Activated CD4-positive, alpha-beta T cell treated with anti-CD3 and anti-CD28 coated beads for 36 hours (primary cell): ENCODE measurements at regions of chr1 and their contacts with region 1.

Region 1: GRCh38 chr1:109984456-109985275 is at the start of gene AHCYL1:
- DNase-seq: peak; percentile 100
- ATAC-seq: peak; percentile 99
- H3K4me3 Mint-ChIP-seq: peak within 1 kb of the TSS; percentile 92
- H3K27ac Mint-ChIP-seq: peak within 1 kb of the TSS; percentile 95
- H3K4me1 Mint-ChIP-seq: peaks cover 31% of the 10 kb centered on the region
- H3K27me3 Mint-ChIP-seq: no peaks in the 10 kb centered on the region
- total RNA-seq, gene AHCYL1: 79.1 to 82.6 TPM

Region 2: GRCh38 chr1:108345787-108346517 is 1638.7 kb before region 1 on chr1:
- CTCF ChIA-PET with region 1: no interaction called
- POLR2A ChIA-PET with region 1: no interaction called
- intact Hi-C with region 1: no loop called
- DNase-seq: no peak
- ATAC-seq: no peak
- H3K4me3 Mint-ChIP-seq: no peak overlapping the region
- H3K27ac Mint-ChIP-seq: no peak overlapping the region
- H3K4me1 Mint-ChIP-seq: no peaks in the 10 kb centered on the region
- H3K27me3 Mint-ChIP-seq: peaks cover 4% of the 10 kb centered on the region

Region 3: DNA sequence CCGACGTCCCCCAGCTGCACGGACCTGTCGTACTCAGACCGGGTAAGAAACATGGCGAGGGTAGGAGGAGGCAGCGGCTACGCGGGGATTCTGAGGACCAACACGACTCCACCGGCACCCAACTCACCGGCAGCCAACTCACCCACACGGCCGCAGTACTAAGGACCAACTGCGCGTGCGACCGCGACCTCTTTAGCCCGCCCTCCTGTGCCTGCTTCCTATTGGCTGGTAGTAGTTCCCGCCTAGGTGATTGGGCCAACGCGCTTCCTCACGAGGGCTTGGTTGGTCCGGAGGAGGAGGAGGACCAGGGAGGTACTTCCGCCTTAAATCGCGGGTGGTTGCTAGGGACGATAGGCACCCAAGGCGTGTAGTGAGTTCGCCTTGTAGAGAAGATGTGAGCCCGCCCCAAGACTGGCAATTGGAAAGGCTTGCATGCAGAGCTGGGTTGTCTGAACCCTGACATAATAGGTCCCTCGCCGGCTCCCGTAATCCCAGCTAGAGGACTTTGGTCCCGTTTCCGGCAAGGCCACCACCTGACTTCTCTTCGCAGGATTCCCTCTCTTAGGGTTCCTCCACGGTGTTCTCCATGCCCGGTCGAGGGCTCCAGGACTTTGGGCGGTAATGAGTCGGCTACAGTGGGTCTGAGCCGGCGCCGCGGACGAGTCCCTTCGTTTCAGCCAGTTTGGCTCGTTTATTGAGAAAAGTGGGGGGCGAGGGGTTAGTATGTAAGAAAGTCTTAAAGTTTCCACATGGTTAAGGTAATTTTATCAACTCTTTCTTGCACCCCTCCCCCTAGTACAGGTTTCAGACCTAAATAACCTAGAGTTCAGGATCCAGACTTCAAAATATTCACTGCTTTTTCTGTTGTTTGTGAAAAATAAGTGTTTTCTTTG is 558.1 kb before region 1 on chr1 and contains the start of gene PSMA5:
- CTCF ChIA-PET with region 1: no interaction called
- POLR2A ChIA-PET with region 1: no interaction called
- intact Hi-C with region 1: loop called in 1 of 2 experiments (anchors 10 kb)
- DNase-seq: peak; percentile 97
- ATAC-seq: peak; percentile 97
- H3K4me3 Mint-ChIP-seq: peak within 1 kb of the TSS; percentile 91
- H3K27ac Mint-ChIP-seq: peak within 1 kb of the TSS; percentile 96
- H3K4me1 Mint-ChIP-seq: peaks cover 34% of the 10 kb centered on the region
- H3K27me3 Mint-ChIP-seq: no peaks in the 10 kb centered on the region
- total RNA-seq, gene PSMA5: 151 to 249 TPM

Region 4: DNA sequence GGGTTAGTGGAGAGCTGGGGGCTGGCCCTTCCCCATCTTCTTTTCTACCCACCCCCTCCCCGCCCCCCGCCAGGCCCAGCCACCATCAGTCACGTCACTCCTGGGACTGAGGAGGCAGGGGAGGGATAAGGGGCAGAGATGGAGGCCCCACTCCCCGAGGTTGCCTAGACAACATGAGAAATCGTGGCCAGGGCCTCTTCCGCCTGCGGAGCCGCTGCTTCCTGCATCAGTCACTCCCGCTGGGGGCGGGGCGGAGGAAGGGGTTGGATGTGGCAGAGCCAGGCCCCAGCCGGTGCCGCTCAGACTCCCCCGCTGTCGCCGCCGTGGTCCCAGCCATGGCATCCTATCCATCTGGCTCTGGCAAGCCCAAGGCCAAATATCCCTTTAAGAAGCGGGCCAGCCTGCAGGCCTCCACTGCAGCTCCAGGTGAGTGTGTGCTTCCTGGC is 363.8 kb before region 1 on chr1:
- CTCF ChIA-PET with region 1: interaction called, 6 read pairs
- POLR2A ChIA-PET with region 1: no interaction called
- intact Hi-C with region 1: loop called in 1 of 2 experiments (anchors 1 kb)
- DNase-seq: peak; percentile 99
- ATAC-seq: peak; percentile 86
- H3K4me3 Mint-ChIP-seq: peak overlapping the region; percentile 97
- H3K27ac Mint-ChIP-seq: peak overlapping the region; percentile 97
- H3K4me1 Mint-ChIP-seq: peaks cover 60% of the 10 kb centered on the region
- H3K27me3 Mint-ChIP-seq: no peaks in the 10 kb centered on the region

Region 5: DNA sequence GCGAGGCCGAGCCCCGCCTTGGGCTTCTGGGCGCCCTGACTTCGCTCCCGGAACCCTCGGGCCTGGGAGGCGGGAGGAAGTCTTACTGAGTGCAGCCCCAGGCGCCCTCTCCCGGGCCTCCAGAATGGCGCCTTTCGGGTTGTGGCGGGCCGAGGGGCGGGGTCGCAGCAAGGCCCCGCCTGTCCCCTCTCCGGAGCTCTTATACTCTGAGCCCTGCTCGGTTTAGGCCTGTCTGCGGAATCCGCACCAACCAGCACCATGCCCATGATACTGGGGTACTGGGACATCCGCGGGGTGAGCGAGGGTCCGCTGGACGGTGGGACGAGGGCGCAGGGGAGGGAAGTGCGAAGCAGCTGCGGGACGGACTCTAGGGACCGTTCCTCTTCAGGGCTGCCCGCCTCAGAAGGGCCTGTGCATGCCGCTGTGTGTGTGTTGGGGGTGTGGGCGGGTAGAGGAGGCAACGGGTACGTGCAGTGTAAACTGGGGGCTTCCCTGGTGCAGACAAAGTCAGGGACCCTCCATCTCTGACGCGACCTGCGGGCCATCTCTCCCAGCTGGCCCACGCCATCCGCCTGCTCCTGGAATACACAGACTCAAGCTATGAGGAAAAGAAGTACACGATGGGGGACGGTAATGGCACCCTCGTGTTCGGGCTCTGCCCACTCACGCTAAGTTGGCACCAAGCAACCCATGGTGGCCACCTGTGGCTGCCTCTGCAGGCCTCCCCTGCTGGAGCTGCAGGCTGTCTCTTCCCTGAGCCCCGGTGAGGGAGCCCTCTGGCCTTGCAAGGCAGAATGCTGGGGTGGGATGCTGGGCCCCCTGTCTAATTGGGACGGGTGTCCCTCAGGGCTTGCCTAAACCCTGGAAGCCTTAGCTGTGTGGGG is 296.8 kb before region 1 on chr1 and contains the start of gene GSTM1:
- CTCF ChIA-PET with region 1: interaction called, 6 read pairs
- POLR2A ChIA-PET with region 1: no interaction called
- intact Hi-C with region 1: loop called in 1 of 2 experiments (anchors 1 kb)
- DNase-seq: peak; percentile 94
- ATAC-seq: peak; percentile 99
- H3K4me3 Mint-ChIP-seq: peak within 1 kb of the TSS; percentile 88
- H3K27ac Mint-ChIP-seq: peak within 1 kb of the TSS; percentile 96
- H3K4me1 Mint-ChIP-seq: peaks cover 20% of the 10 kb centered on the region
- H3K27me3 Mint-ChIP-seq: no peaks in the 10 kb centered on the region
- total RNA-seq, gene GSTM1: 94.0 to 116 TPM

Region 6: GRCh38 chr1:109718491-109718890 is 266.2 kb before region 1 on chr1:
- CTCF ChIA-PET with region 1: no interaction called
- POLR2A ChIA-PET with region 1: no interaction called
- intact Hi-C with region 1: no loop called
- DNase-seq: no peak
- ATAC-seq: no peak
- H3K4me3 Mint-ChIP-seq: no peak overlapping the region
- H3K27ac Mint-ChIP-seq: no peak overlapping the region
- H3K4me1 Mint-ChIP-seq: peaks cover 4% of the 10 kb centered on the region
- H3K27me3 Mint-ChIP-seq: peaks cover 3% of the 10 kb centered on the region

Region 7: DNA sequence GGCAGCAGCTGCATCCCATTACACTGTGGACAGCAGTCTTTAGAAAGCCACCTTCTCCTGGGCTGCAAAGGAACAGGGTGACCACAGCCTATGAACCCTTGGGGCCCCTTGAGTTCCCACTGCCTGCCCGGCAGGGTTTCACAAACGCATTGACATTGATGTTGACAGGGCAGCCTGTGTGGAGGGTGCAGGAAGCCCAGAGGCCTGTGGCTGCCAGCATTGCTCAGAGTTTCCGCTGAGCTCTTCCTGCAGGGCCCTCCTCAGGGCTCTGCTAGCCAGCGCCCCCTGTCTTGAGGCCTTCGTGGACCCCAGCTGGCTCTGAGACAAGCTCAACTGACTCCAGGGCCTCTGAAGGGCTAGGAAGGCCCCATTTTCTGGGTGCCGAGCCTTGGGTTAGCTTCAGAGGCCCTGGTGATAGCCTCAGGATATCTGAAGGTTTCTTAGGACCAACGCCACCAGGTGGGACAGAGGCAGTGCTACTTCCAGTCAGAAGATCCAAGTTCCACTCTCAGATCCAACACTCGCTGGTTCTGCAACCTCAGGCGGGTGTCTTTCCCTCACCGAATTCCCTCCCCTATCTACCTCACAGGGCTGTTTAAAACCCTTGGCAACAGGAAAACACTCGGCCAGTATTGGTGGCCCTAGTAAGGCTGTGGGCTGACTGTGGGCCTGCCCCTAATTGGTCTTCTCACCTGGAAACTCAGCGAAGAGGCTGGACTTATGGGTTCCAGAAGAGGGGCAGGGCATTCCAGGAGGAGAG is 193.8 kb before region 1 on chr1:
- CTCF ChIA-PET with region 1: interaction called, 499 read pairs
- POLR2A ChIA-PET with region 1: interaction called, 5 read pairs
- intact Hi-C with region 1: loop called (anchors 1 to 5 kb)
- DNase-seq: peak; percentile 93
- ATAC-seq: peak; percentile 94
- H3K4me3 Mint-ChIP-seq: no peak overlapping the region
- H3K27ac Mint-ChIP-seq: peak overlapping the region; percentile 87
- H3K4me1 Mint-ChIP-seq: peaks cover 55% of the 10 kb centered on the region
- H3K27me3 Mint-ChIP-seq: no peaks in the 10 kb centered on the region

Region 8: GRCh38 chr1:109910123-109910962 is 74.3 kb before region 1 on chr1 and contains the start of gene CSF1:
- CTCF ChIA-PET with region 1: interaction called, 11 read pairs
- POLR2A ChIA-PET with region 1: interaction called, 4 read pairs
- intact Hi-C with region 1: loop called in 1 of 2 experiments (anchors 1 kb)
- DNase-seq: peak; percentile 72
- ATAC-seq: peak; percentile 47
- H3K4me3 Mint-ChIP-seq: peak within 1 kb of the TSS; percentile 78
- H3K27ac Mint-ChIP-seq: peak within 1 kb of the TSS; percentile 85
- H3K4me1 Mint-ChIP-seq: peaks cover 61% of the 10 kb centered on the region
- H3K27me3 Mint-ChIP-seq: peaks cover 2% of the 10 kb centered on the region
- total RNA-seq, gene CSF1: 37.7 to 44.8 TPM

Region 9: GRCh38 chr1:110003747-110004630 is 19.3 kb after region 1 on chr1:
- CTCF ChIA-PET with region 1: interaction called, 33 read pairs
- POLR2A ChIA-PET with region 1: interaction called, 3 read pairs
- intact Hi-C with region 1: no loop called
- DNase-seq: peak; percentile 76
- ATAC-seq: peak; percentile 96
- H3K4me3 Mint-ChIP-seq: peak overlapping the region; percentile 14
- H3K27ac Mint-ChIP-seq: peak overlapping the region; percentile 81
- H3K4me1 Mint-ChIP-seq: peaks cover 24% of the 10 kb centered on the region
- H3K27me3 Mint-ChIP-seq: no peaks in the 10 kb centered on the region